Activated CD4-positive, alpha-beta memory T cell treated with anti-CD3 and anti-CD28 coated beads, Interleukin-2, amount 10 ng/mL, durations not matched to agents 7 days and 5 days (primary cell): ENCODE measurements at regions of chr16 and their contacts with region 1.

Region 1: GRCh38 chr16:57535680-57536305 is 578 bp downstream of the CCDC102A start:
- DNase-seq: peak; percentile 95
- H3K4me3 Mint-ChIP-seq: peak overlapping the region; percentile 79
- H3K27ac Mint-ChIP-seq: peak overlapping the region; percentile 80
- H3K4me1 Mint-ChIP-seq: peaks cover 79% of the 10 kb centered on the region
- H3K27me3 Mint-ChIP-seq: no peaks in the 10 kb centered on the region

Region 2: GRCh38 chr16:57485916-57486857 is 49.6 kb before region 1 on chr16 and contains the start of gene DOK4:
- CTCF ChIA-PET with region 1: interaction called, 4 read pairs
- POLR2A ChIA-PET with region 1: interaction called, 23 read pairs
- DNase-seq: peak; percentile 80
- H3K4me3 Mint-ChIP-seq: peak within 1 kb of the TSS; percentile 75
- H3K27ac Mint-ChIP-seq: peak within 1 kb of the TSS; percentile 40
- H3K4me1 Mint-ChIP-seq: peaks cover 18% of the 10 kb centered on the region
- H3K27me3 Mint-ChIP-seq: peaks cover 11% of the 10 kb centered on the region
- total RNA-seq, gene DOK4: 2.5 to 3.4 TPM

Region 3: DNA sequence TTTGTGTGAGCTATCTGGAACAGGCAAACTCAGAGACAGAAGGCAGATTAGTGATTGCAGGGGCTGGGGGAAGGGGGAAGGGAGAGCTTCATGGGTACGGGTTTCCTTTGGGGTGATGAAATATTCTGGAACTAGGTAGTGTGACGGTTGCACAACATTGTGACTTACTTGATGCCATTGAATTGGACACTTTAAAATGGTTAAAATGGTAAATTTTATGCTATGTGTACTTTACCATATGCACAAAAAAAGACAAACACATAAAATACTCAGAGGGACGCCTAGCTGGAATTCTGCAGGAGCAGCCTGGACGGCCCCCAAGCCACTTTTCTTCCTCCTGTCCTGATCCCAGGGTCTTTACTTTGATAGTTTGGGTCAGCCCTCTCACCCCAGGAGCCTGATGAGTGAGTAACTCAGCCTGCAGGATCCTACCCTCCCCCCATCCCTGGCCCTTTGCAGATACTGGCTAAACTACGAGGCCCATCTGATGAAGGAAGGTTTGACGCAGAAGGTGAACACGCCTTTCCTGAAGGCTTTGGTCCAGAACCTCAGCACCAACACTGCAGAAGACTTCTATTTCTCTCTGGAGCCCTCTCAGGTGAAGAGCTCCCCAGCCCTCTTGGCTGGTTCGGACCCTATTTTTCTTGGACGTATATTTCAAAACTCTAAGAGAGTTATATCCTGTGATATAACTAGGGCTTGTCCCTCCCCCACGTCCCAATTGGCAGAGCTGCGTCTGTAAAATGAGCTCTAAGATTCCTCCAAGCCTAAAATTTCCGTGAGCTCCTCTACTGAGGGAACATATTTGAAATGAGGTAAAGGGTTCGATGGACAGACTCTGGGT is 140.2 kb after region 1 on chr16:
- CTCF ChIA-PET with region 1: no interaction called
- POLR2A ChIA-PET with region 1: no interaction called
- DNase-seq: no peak
- H3K4me3 Mint-ChIP-seq: no peak overlapping the region
- H3K27ac Mint-ChIP-seq: no peak overlapping the region
- H3K4me1 Mint-ChIP-seq: no peaks in the 10 kb centered on the region
- H3K27me3 Mint-ChIP-seq: peaks cover 32% of the 10 kb centered on the region